ENCODE measurements at regions of chr5 and their contacts with region 1.

Region 1: DNA sequence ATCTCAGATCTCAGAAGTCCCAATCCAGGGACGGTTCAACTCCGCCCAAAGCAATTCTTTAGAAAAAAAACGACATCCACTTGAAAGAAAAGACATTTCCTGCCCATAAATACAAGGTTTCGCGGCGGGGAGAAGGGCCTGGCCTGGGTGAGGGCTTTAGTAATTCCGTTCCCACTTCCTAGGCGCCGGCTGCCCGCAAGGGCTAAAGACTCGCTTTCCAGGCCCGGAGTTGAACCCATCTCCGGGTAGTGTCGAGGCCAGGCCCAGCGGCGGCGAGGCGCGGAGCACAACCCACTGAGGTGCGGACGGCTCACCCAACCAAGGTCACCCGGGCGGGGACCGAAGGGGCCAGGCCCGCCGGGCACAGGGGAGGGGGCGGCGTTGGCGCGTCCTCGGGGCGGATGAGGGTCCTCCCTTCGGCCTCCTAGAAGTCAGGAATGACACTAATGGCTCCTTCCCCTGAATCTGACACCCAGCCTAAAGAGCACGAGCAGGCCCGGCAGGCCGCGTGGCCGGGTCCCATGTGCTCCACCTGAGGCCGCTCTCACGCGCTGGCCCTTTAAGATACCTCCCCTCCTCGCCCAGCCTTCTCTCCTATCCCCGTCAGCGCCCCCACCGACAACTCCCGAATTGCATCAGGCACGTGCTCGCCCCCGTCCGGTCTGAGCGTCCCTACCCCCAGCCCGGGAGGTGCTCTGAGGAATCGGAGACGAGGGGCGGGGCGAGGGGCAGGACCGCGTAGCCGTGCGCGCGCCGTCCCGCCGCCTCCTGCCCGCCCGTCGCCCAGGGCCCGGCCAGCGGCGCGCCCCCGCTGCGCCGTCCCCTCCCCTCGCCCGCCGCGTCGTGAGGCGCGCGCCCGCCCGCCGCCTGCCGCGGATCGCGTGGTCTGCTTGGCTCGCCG is 467 bp upstream of the LARP1 start:
- DNase-seq: peak; percentile 96 to 100 (median 99)

Region 2: DNA sequence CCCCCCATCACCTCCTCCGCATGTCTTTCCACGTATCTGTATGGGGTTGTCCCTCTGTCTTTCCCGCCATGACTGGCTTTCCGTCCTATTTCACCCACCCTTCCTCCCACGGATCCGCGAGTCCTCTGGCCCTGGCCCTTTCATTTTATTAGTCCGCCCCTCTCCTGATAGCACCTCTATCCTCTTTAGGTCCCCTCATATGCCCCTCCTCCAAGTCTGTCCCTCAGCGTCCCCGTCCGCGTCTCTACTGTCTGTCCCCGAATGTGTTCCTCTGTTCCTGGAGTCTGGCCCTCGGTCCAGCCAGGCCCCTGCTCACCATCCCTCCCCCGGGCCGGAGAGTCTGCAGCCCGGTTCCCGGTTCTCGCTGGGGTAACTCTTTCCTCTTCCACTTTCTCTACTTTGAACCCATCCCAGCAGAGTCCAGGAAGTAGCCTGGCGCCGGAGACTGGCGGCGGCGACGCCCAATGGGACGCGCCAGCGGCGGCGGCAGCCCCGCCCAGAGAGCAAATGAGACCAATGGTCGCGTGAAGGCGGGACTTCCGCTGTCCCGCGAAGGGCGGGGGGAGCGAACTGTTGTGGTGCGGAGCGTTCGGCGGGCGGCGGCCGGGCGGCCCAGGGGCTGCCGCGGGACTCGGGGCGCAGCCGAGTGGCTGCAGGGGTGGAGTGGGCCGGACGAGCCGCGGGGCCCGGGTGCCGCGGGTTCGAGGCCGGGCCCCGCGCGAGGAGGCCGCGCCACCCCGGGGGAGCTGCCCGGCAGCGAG is 309.1 kb before region 1 on chr5 and contains the start of gene SAP30L:
- intact Hi-C with region 1: loop called (anchors 10 kb)
- DNase-seq: peak; percentile 89 to 97 (median 95)

Region 3: DNA sequence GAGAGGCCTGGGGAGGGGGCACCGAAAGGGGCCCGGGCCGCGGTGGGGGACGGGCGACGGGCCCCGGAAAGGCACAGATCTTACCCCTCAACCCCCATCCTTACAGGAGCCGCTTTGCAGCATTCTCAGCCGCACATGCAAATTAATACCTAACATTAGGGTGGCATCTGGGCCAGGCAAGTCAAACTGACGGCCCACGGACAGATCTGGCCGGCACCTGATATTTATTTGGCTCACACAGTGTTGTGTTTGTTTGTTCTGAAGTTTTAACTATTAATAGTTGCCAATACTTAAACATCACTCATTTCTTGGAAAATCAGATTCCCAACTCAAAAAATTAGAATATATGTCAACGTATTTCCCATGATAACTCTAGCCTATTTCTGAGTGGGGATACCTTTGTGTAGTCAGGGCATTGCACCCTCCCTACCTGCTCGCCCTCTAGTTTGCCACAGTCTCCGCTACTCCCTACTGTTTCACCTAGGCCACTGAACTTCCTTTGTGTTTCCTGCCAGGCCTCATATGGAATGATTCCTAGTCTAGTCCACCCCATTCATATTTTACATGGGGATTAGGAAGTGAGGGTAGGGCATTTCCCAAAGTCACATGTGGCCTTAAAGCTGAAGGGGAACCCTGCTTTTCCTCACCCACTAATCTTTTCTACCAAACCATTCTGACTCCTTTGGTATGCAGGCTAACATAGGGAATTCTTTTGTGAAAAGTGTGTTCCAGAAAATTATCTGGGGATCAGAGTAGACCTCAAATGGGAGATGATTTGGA is 71.4 kb before region 1 on chr5:
- intact Hi-C with region 1: loop called (anchors 2 kb)
- DNase-seq: no peak

Region 4: DNA sequence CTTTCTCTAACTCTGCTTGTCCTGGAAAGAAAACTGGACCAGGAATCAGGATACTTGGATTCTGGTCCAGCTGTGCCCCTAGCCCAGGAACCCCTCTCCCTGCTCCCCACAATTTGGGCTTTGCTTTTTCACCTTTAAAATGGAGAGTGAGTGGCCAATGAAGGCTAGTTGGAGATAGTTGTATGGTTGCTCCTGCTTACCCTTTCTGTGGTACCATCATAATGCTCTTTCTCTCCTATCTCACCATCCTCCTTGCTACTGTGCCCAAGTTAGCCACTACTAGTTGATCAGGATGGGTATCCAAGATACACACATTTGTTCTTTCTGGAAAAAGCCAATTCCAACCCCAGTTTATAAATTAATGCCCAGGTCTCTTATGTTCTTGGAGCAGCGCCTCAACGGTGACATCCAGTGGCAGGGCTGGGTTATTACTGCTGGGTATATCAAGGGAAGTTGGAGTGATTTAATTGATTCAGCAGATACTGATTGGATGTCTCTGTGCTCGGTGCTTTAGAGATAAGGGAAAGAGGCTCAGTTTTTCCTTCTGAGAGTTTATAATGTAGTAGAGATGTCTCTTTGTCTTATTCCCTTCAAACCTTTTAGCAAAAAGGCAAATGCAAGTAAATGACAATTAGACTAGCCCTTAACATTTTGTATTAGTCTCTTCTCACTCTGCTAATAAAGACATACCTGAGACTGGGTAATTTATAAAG is 57.1 kb after region 1 on chr5:
- intact Hi-C with region 1: loop called (anchors 5 kb)
- DNase-seq: peak; percentile 31 to 85 (median 62)

Region 5: DNA sequence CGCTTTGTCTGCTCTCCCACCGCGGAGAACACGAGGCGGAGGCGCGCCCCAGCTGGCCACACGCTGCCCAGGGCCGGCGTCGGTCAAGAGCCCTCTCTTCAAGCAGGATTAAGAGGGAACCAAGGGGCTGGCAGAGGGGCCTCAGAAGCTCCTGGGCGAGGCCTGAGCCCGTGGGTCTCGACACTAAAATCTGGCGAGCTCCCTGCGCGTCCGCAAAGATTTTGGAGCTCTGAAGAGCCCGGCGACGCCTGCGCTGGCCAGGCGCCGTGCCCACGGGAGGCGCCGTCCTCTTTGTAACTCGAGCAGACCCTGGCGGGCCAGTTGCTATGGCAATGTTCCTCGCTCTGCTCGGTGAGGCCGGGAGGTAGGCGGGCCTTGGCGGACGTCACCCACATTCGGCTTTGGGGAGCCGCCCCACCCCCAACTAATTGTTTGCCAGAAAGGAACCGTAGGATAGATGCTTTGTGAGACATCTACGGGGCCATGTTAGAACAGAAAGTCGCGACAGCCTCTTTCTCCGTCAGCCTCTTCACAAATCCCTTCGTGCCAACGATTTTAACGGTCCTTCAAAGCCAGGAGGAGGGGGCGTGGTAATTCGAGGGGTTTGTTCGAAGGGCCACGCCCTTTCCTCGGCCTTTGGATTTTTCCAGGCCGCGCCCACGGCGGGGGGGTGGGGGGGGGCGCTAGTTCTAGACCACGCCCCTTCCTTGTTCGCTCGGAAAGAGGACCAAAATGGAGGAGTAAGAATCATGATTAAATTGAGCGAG is 103.0 kb after region 1 on chr5:
- intact Hi-C with region 1: loop called (anchors 2 kb)
- DNase-seq: peak; percentile 86 to 97 (median 92)

Region 6: GRCh38 chr5:154940772-154941620 is 186.3 kb after region 1 on chr5 and contains the start of gene MRPL22:
- intact Hi-C with region 1: loop called (anchors 10 kb)
- DNase-seq: peak; percentile 76 to 97 (median 91)

Region 7: GRCh38 chr5:154967421-154968024 is 212.8 kb after region 1 on chr5:
- intact Hi-C with region 1: no loop called
- DNase-seq: peak in 14 of 42 donors; percentile 16 to 74 (median 36)

Measured in head of caudate nucleus (tissue), 42 donors.